ENCODE measurements at regions of chr9 and their contacts with region 1.

Region 1: GRCh38 chr9:125143375-125144090 is at the start of gene SCAI:
- DNase-seq: peak; percentile 99
- H3K4me3 Mint-ChIP-seq: peak within 1 kb of the TSS; percentile 89
- H3K27ac Mint-ChIP-seq: peak within 1 kb of the TSS; percentile 38
- H3K4me1 Mint-ChIP-seq: peaks cover 35% of the 10 kb centered on the region
- H3K27me3 Mint-ChIP-seq: no peaks in the 10 kb centered on the region
- total RNA-seq, gene SCAI: 7.9 to 8.5 TPM

Region 2: DNA sequence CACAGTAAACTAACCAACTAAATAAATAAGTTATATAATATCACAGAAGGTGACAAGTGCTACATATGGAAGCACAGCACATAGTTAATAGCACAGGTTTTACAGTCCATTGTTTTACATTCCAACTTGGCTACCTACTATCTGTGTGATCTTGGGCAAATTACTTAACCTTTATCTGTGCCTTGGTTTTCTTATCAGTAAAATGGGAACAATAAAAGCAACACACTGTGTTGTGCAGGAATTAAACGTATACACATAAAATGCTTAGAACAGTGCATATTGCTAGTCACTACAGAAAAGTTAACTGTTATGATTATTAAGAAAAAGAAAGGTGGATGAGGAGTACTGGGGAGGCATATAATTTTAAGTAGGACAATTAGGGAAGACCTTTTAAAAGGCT is 159.8 kb before region 1 on chr9:
- CTCF ChIA-PET with region 1: no interaction called
- POLR2A ChIA-PET with region 1: no interaction called
- DNase-seq: no peak
- H3K4me3 Mint-ChIP-seq: no peak overlapping the region
- H3K27ac Mint-ChIP-seq: no peak overlapping the region
- H3K4me1 Mint-ChIP-seq: no peaks in the 10 kb centered on the region
- H3K27me3 Mint-ChIP-seq: no peaks in the 10 kb centered on the region

Region 3: DNA sequence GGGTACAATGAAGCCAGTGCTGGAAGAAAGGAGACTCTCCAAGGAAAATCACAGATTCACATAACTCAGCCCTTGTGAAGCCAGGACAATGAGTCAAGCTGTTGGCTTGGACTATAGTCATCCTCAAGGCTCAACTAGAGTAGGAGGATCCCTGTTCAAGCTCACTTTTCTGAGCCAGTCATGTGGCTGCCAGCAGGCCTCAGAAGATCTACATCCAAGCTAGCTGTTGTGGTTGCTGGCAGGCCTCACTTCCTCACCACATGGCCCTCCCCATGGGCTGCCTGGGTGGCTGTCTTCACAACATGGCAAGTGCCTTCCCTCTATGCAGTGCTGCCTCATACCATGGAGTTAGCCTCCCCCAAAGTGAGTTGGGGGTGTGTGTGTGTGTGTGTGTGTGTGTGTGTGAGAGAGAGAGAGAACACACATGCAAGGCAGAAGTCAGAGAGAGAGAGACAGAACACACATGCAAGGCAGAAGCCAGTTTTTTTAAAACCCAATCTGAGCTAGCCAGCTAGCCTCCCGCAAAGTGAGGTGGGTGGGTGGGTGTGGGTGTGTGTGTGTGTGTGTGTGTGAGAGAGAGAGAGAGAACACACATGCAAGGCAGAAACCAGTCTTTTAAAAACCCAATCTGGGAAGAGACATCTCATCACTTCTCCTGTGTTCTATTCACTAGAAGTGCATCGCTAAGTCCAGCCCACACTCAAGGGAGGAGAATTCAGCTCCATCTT is 17.4 kb before region 1 on chr9:
- CTCF ChIA-PET with region 1: interaction called, 24 read pairs
- POLR2A ChIA-PET with region 1: interaction called, 4 read pairs
- DNase-seq: peak; percentile 88
- H3K4me3 Mint-ChIP-seq: peak overlapping the region; percentile 22
- H3K27ac Mint-ChIP-seq: peak overlapping the region; percentile 91
- H3K4me1 Mint-ChIP-seq: peaks cover 24% of the 10 kb centered on the region
- H3K27me3 Mint-ChIP-seq: no peaks in the 10 kb centered on the region